Right lobe of liver (tissue), 6 donors: ENCODE measurements at regions of chr19 and their contacts with region 1.

Region 1: GRCh38 chr19:12983542-12984142 is 11.6 kb upstream of the NFIX start:
- DNase-seq: peak; percentile 81 to 84 (median 83)
- ATAC-seq: peak; percentile 88 to 99 (median 90)
- H3K4me3 ChIP-seq: no peak overlapping the region
- H3K27ac ChIP-seq: no peak overlapping the region
- H3K4me1 ChIP-seq: no peaks in the 10 kb centered on the region
- H3K27me3 ChIP-seq: no peaks in the 10 kb centered on the region
- CTCF ChIP-seq: peak; percentile 92 to 99 (median 97)
- POLR2A ChIP-seq: no peak

Region 2: DNA sequence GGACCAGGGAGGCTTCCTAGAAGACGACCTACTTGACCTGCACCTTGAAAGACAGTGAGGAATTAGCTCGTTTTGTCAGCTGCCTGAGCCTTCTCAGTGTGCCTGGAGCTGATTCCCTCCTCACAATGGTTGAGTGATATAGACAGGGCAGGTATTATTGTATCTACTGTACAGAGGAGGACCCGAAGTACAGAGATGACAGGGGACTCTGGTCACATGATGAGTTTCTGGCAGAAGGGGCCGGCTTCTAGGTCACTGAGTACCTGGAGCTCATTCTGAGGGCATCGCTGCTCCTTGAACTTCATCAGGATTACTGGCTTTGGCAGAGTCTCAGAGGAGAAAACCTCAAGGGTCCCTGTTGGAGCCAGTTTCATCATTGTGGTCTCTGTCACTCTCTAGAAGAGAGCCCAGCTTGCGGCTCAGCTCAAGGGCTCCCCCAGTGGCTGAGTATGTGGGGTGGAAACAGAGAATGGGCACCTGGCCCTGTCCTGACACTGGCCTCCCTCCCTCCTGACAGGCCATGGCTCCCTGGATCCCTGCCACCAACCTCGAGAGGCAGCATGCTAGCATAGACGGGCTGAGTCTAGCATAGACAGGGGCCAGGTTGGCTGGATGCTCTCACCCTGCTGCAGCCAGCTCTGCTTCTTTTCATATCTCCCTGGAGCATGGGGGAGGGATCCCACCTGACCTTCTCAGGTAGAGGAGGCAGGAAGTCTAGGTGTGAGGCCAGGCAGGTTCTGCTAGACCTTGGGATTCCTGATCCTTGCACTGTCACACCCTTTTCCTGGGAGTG is 50.4 kb after region 1 on chr19:
- intact Hi-C with region 1: loop called in 1 of 2 experiments (anchors 5 kb)
- DNase-seq: peak; percentile 79 to 89 (median 88)
- ATAC-seq: peak; percentile 85 to 87 (median 86)
- H3K4me3 ChIP-seq: no peak overlapping the region
- H3K27ac ChIP-seq: no peak overlapping the region
- H3K4me1 ChIP-seq: peaks cover 0 to 48% (median 23%) of the 10 kb centered on the region in 4 donors
- H3K27me3 ChIP-seq: no peaks in the 10 kb centered on the region
- CTCF ChIP-seq: peak; percentile 76 to 91 (median 85)
- POLR2A ChIP-seq: no peak

Region 3: DNA sequence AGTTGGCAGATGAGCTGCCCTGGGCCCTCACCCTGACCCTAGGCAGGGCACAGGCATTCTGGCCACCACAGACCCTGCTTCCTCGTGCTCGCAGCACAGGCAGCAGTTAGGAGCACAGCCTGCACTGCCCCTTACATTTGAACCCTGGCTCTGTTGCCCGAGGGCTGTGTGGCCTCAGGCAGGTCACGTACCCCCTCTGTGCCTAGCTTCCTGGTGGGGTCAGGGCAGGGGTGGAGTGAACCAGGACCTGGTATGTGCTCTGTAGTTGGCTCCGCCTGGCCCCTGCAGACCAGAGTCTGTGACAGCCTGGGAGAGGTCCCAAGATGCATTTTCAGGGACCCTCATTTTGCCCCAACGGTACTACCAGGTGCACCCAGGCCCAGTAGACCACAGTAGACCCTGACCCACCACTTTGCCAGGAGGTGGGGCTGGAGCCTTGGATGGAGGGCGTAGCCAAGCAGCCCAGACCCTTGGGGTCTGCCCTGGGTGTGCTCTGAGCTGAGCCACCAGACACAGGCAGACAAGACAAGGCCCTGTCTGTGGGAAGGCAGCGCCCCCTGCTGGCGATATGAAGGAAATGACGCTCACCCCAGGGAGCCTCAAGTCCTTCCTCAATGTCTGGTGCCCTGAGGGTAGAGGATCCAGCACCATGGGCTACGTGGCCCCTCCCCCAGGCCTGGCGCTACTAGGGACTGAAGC is 109.9 kb after region 1 on chr19:
- intact Hi-C with region 1: loop called (anchors 2 to 5 kb)
- DNase-seq: peak; percentile 77 to 86 (median 79)
- ATAC-seq: peak; percentile 69 to 77 (median 72)
- H3K4me3 ChIP-seq: no peak overlapping the region
- H3K27ac ChIP-seq: no peak overlapping the region
- H3K4me1 ChIP-seq: peaks cover 0 to 26% (median 3%) of the 10 kb centered on the region in 4 donors
- H3K27me3 ChIP-seq: peaks cover 0 to 6% of the 10 kb centered on the region in 2 donors
- CTCF ChIP-seq: peak; percentile 94 to 97 (median 95)
- POLR2A ChIP-seq: no peak